Upper lobe of right lung (tissue), 1 donor: ENCODE measurements at regions of chr6 and their contacts with region 1.

Region 1: GRCh38 chr6:42043787-42044475 is 6.4 kb upstream of the TAF8 start:
- DNase-seq: peak; percentile 93
- ATAC-seq: peak; percentile 74
- H3K4me3 ChIP-seq: peak overlapping the region; percentile 87
- H3K27ac ChIP-seq: peak overlapping the region; percentile 96
- H3K4me1 ChIP-seq: peaks cover 67% of the 10 kb centered on the region
- H3K27me3 ChIP-seq: no peaks in the 10 kb centered on the region
- CTCF ChIP-seq: peak; percentile 99

Region 2: DNA sequence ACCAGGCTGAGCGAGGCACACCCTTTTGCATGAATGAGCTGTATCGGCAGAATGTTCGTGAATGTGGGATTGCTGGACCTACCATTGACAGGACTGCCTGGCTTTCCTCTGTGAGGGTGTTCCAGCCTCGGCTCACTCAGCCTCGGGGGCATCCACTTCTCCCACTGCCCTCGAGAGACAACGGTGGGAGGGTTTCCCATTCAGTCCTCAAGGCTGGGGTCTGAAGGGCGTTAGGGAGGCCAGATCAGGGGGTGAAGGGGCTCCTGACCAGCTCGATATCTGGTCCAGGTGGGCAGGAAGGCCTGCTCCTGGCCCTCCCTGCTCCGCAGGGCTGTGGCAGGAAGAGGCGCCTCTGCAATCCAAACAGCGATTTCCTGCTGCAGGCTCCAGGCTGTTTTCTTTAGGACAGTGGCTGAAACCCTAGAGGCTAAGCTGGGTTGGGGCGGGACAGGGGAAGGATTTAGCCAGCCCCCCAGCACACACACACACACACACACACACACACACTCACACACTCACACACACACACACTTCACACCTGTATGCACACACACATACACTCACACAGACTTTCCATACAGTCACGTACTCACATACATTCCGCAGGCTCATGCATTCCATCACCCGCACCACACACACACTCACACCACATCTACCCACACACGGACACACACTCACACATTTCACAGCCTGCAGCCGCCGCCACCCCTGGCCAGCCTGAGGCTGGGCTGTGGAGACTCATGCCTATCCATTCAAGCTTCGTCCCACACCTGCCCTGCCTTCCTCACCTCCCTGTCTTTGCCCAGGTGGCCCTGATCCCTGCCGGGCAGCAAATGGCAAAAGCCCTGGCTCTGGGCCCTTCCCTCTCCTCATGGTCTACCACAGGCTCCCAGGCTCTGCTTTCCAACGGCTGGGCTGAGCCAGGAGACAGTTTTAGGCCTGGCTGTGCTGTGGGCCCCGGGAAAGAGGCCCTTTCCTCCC is 387.9 kb before region 1 on chr6:
- intact Hi-C with region 1: no loop called
- DNase-seq: no peak
- ATAC-seq: peak; percentile 12
- H3K4me3 ChIP-seq: no peak overlapping the region
- H3K27ac ChIP-seq: no peak overlapping the region
- H3K4me1 ChIP-seq: peaks cover 9% of the 10 kb centered on the region
- H3K27me3 ChIP-seq: peaks cover 4% of the 10 kb centered on the region
- CTCF ChIP-seq: no peak

Region 3: DNA sequence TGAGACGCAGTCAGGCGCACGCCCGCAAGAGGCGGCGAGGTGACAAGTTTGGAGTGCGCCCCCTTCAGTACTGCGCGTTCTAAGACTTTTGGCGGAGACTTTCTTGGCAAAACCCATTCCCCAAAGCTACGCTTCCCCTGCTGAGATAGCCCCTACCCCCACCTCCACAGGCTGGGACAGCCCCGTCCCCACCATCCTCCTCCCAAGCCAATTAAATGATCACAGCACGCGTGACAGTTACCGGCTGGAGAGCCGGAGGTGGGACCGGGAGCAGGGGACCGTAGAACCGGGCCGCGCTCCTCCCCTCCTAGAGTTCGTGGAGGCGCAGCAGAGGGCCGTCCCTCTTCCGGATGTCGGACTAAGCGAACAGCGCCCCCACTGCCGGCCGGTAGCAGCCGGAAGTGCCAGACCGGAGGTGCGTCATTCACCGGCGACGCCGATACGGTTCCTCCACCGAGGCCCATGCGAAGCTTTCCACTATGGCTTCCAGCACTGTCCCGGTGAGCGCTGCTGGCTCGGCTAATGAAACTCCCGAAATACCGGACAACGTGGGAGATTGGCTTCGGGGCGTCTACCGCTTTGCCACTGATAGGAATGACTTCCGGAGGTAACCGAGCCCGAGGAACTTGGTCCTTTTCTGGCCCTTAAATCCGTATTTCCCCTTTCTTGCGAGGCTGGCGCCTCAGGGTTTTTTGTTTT is 256.6 kb before region 1 on chr6 and contains the start of gene TOMM6:
- intact Hi-C with region 1: loop called (anchors 5 kb)
- DNase-seq: peak; percentile 98
- ATAC-seq: peak; percentile 93
- H3K4me3 ChIP-seq: peak within 1 kb of the TSS; percentile 98
- H3K27ac ChIP-seq: peak within 1 kb of the TSS; percentile 98
- H3K4me1 ChIP-seq: peaks cover 48% of the 10 kb centered on the region
- H3K27me3 ChIP-seq: no peaks in the 10 kb centered on the region
- CTCF ChIP-seq: peak; percentile 89
- total RNA-seq, gene TOMM6: 138 TPM

Region 4: DNA sequence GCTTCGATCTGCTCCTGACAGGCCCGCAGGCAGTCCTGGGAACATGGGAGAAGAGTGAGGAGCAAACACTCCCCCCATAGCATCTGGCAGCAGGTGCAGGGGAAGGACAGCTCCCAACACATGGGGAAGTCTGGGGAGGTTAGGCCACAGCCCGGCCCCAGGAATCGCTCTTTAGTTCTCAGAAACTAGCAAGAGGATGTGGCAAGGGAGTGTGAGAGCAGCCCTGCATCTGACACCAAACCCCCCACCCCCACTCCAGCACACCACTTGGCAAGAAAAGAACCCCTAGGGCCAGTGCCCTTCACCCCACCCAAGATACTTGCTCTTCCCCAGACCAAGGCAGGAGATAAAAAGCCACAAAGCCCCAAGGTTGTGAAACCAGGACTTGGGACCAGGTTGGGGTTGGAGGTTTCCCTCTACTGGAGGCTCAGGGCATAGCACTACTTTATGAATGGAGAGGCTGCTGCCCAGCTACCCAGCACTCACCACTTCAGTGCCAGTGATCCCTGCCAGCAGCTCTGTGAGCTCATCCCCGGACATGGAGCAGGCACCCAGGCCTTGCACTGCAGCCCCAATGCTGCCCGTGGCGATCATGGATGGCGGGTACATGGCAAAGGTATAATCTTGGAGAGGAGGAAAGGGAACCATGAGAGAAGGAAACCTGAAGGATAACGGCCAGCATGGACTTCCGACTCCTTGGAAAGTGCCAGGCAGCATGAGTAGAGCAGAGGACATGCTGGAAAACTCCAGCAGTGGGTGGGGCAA is 107.7 kb before region 1 on chr6:
- intact Hi-C with region 1: loop called (anchors 5 kb)
- DNase-seq: peak; percentile 80
- ATAC-seq: peak; percentile 80
- H3K4me3 ChIP-seq: no peak overlapping the region
- H3K27ac ChIP-seq: peak overlapping the region; percentile 84
- H3K4me1 ChIP-seq: peaks cover 62% of the 10 kb centered on the region
- H3K27me3 ChIP-seq: no peaks in the 10 kb centered on the region
- CTCF ChIP-seq: peak; percentile 81